ENCODE measurements at regions of chr3 and their contacts with region 1.

Region 1: DNA sequence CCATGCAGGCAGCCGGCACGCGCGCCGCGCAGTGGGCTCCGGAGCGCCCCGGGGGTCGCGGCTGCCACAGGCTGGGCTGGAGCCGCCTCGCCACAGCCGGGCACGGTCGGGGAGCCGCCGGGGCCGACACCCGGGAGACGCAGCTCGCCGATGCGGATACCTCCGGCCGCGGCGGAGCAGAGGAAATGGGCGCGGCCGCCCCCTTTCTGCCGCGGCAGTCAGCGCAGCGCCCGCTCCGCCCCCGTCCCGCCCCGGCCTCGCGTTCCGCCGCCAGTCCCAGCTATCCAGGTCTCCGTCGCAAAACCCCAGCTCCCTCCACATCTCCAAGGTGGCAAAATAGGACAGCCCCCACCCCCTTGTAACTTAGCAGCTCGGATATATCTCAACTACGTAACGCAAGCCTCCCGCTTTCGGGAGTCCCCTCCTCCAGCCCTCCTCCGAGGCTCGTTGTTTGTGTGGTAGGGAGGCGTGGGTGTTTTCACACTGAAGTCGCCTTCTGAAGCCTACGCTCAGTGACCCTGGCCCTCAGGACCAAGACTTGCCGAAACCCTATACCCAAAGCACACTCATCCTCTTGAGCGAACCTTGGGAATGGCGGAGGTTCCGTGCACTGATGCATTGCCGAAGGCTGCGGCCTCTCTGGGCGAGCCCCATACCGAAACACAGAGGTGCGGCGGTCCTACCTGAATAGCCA is at the start of gene SH3BP5:
- DNase-seq: peak; percentile 63 to 79 (median 69)
- H3K4me3 ChIP-seq: peak within 1 kb of the TSS; percentile 92
- H3K4me3 Mint-ChIP-seq: peak within 1 kb of the TSS; percentile 91 to 97 (median 95)
- H3K27ac ChIP-seq: peak within 1 kb of the TSS; percentile 75
- H3K27ac Mint-ChIP-seq: peak within 1 kb of the TSS; percentile 70 to 95 (median 90)
- H3K4me1 ChIP-seq: peaks cover 55% of the 10 kb centered on the region
- H3K4me1 Mint-ChIP-seq: peaks cover 49 to 58% (median 55%) of the 10 kb centered on the region in 3 donors
- H3K27me3 ChIP-seq: no peaks in the 10 kb centered on the region
- H3K27me3 Mint-ChIP-seq: no peaks in the 10 kb centered on the region
- total RNA-seq, gene SH3BP5: 14.2 to 15.5 TPM

Region 2: GRCh38 chr3:15276028-15276724 is 56.4 kb before region 1 on chr3:
- CTCF ChIA-PET with region 1: interaction called, 200 read pairs
- POLR2A ChIA-PET with region 1: interaction called, 7 read pairs
- DNase-seq: no peak
- H3K4me3 ChIP-seq: no peak overlapping the region
- H3K4me3 Mint-ChIP-seq: peak overlapping the region in 2 of 7 donors; percentile 0 to 13
- H3K27ac ChIP-seq: no peak overlapping the region
- H3K27ac Mint-ChIP-seq: peak overlapping the region; percentile 20 to 96 (median 65)
- H3K4me1 ChIP-seq: peaks cover 82% of the 10 kb centered on the region
- H3K4me1 Mint-ChIP-seq: peaks cover 79 to 94% (median 92%) of the 10 kb centered on the region in 3 donors
- H3K27me3 ChIP-seq: no peaks in the 10 kb centered on the region
- H3K27me3 Mint-ChIP-seq: no peaks in the 10 kb centered on the region

Region 3: DNA sequence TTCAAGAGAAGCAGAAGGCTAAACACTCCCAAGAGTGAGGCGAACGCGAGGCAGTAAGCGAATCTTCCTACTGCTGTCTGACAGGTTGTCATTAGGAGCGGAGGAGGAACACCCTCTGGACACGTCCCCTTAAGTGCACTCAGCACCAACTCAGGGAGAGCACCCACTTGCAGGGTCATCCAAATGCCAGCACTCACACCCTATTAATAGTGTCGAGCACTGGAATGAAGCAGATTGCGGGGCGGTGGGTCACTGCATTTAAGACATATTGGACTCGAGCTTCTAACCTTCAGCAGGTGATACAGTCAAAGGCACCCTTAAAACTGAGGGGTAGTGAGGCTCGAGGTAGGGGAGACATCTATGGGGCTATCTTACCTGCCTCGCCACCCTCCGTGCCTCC is 28.8 kb before region 1 on chr3:
- CTCF ChIA-PET with region 1: interaction called, 16 read pairs
- POLR2A ChIA-PET with region 1: interaction called, 5 read pairs
- DNase-seq: no peak
- H3K4me3 ChIP-seq: peak overlapping the region; percentile 42
- H3K4me3 Mint-ChIP-seq: peak overlapping the region; percentile 81 to 96 (median 91)
- H3K27ac ChIP-seq: peak overlapping the region; percentile 12
- H3K27ac Mint-ChIP-seq: peak overlapping the region; percentile 82 to 97 (median 94)
- H3K4me1 ChIP-seq: peaks cover 82% of the 10 kb centered on the region
- H3K4me1 Mint-ChIP-seq: peaks cover 65 to 85% (median 83%) of the 10 kb centered on the region in 3 donors
- H3K27me3 ChIP-seq: no peaks in the 10 kb centered on the region
- H3K27me3 Mint-ChIP-seq: no peaks in the 10 kb centered on the region

Region 4: GRCh38 chr3:15319575-15319974 is 13.0 kb before region 1 on chr3:
- CTCF ChIA-PET with region 1: interaction called, 12 read pairs
- POLR2A ChIA-PET with region 1: interaction called, 4 read pairs
- DNase-seq: no peak
- H3K4me3 ChIP-seq: no peak overlapping the region
- H3K4me3 Mint-ChIP-seq: peak overlapping the region in 3 of 7 donors; percentile 11 to 35 (median 22)
- H3K27ac ChIP-seq: no peak overlapping the region
- H3K27ac Mint-ChIP-seq: peak overlapping the region in 5 of 8 donors; percentile 1 to 74 (median 23)
- H3K4me1 ChIP-seq: peaks cover 71% of the 10 kb centered on the region
- H3K4me1 Mint-ChIP-seq: peaks cover 75 to 83% (median 83%) of the 10 kb centered on the region in 3 donors
- H3K27me3 ChIP-seq: no peaks in the 10 kb centered on the region
- H3K27me3 Mint-ChIP-seq: peaks cover 0 to 1% of the 10 kb centered on the region in 2 donors

Region 5: GRCh38 chr3:15356186-15356585 is 23.6 kb after region 1 on chr3:
- CTCF ChIA-PET with region 1: interaction called, 11 read pairs
- POLR2A ChIA-PET with region 1: no interaction called
- DNase-seq: no peak
- H3K4me3 ChIP-seq: peak overlapping the region; percentile 37
- H3K4me3 Mint-ChIP-seq: peak overlapping the region; percentile 18 to 81 (median 60)
- H3K27ac ChIP-seq: no peak overlapping the region
- H3K27ac Mint-ChIP-seq: peak overlapping the region; percentile 66 to 92 (median 81)
- H3K4me1 ChIP-seq: peaks cover 37% of the 10 kb centered on the region
- H3K4me1 Mint-ChIP-seq: peaks cover 22 to 46% (median 39%) of the 10 kb centered on the region in 3 donors
- H3K27me3 ChIP-seq: no peaks in the 10 kb centered on the region
- H3K27me3 Mint-ChIP-seq: no peaks in the 10 kb centered on the region